Mucosa of descending colon (tissue), 3 donors: ENCODE measurements at regions of chr17 and their contacts with region 1.

Region 1: DNA sequence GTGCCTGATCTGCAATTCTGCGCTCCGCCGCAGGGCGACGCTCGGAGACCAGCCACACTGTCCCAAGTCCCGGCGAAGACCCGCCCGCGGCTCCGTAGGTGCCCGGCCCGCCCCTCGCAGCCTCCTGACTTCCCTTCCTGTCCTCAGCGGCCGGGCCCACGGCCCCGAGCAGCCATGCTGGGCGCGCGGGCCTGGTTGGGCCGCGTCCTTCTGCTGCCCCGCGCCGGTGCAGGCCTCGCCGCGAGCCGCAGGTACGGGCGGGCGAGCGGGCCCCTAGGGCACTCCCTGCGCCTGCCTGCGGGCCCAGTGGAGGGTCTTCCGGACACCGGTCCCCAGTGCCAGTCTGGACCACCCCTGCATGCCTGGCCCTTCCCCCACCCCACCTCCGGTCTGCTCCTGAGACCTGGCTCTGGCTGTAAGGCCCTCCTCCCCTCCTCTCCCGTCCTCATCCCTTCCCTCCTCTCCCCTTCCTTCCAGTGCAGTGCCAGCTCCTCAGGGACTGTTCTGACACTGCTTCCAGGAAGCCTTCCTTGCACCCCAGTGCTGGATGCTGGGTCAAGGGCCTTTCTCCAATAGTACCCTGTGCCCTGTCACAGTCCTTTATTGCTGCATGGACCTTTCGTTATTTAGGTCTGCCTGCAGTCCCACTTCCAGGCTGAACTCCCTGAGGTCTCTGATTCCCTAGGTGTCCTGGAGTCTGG is at the start of gene SPATA20:
- DNase-seq: peak; percentile 95
- ATAC-seq: peak; percentile 78
- H3K4me3 ChIP-seq: peak within 1 kb of the TSS; percentile 26
- H3K4me1 ChIP-seq: peaks cover 39% of the 10 kb centered on the region
- CTCF ChIP-seq: peak; percentile 96
- total RNA-seq, gene SPATA20: 54.3 to 95.3 (median 65.4) TPM

Region 2: DNA sequence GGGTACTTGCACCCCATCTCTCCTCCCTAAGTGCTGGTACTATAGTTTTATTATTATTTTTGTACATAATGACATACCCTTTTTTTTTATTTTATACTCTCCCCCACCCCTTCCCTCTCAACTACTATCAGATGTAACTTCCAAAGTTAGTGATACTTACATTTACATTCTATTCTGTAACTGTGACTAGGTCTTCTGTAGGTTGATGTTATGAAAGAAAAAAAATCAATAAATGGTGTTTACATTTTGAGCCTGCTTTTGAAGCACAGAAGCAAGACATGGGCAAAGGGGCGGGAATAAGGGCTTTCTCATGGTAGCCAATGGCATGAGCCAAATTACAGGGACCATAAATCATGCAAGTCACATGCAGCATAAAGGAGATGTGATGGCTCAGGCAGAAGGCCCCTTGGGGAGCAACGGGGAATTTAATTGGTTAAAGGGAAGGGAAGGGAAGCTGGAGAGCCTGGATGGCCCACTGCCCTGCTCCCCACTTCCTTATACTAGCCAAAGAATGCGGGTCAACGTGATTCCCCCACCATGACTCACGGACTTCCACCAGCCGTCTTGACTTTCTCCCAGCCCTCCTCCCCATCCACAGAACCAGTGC is 123.5 kb before region 1 on chr17:
- intact Hi-C with region 1: no loop called
- DNase-seq: peak in 1 of 3 donors; percentile 27
- ATAC-seq: no peak
- H3K4me3 ChIP-seq: no peak overlapping the region
- H3K4me1 ChIP-seq: peaks cover 45% of the 10 kb centered on the region
- CTCF ChIP-seq: no peak

Region 3: DNA sequence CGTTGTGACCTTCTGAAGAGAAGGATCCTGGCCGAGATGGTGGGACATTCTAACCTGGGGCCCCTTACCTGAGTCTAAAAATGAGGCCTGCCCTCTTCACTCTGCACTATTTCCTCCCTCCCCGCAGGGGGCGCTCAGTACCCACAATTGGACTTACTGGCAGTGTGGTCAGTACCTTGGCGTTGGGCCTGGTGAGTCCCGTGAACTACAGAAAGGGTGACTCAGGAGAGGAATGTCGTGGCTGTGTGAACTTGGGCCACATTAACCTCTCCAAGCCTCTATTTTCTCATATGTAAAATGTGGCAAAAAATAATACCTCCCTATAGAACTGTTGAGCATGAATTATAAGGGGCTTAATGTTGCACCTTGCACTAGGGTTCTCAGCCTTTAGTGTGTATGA is 64.7 kb before region 1 on chr17:
- intact Hi-C with region 1: loop called in 1 of 2 experiments (anchors 10 kb)
- DNase-seq: peak; percentile 91 to 94 (median 92)
- ATAC-seq: peak; percentile 72
- H3K4me3 ChIP-seq: no peak overlapping the region
- H3K4me1 ChIP-seq: peaks cover 19% of the 10 kb centered on the region
- CTCF ChIP-seq: peak; percentile 77

Region 4: DNA sequence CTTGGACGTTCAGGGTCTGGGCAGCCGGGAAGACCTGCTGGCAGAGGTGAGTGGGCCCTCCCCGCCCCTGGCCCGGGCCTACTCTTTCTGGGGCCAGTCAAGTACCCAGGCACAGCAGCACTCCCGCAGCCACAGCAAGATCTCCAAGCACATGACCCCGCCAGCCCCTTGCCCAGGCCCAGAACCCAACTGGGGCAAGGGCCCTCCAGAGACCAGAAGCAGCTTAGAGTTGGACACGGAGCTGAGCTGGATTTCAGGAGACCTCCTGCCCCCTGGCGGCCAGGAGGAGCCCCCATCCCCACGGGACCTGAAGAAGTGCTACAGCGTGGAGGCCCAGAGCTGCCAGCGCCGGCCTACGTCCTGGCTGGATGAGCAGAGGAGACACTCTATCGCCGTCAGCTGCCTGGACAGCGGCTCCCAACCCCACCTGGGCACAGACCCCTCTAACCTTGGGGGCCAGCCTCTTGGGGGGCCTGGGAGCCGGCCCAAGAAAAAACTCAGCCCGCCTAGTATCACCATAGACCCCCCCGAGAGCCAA is 78.9 kb after region 1 on chr17:
- intact Hi-C with region 1: loop called in 1 of 2 experiments (anchors 5 kb)
- DNase-seq: peak; percentile 71 to 75 (median 74)
- ATAC-seq: no peak
- H3K4me3 ChIP-seq: no peak overlapping the region
- H3K4me1 ChIP-seq: peaks cover 26% of the 10 kb centered on the region
- CTCF ChIP-seq: peak; percentile 31

Region 5: GRCh38 chr17:50681263-50682210 is 134.4 kb after region 1 on chr17:
- intact Hi-C with region 1: loop called in 1 of 2 experiments (anchors 10 kb)
- DNase-seq: peak in 1 of 3 donors; percentile 71
- ATAC-seq: peak; percentile 34
- H3K4me3 ChIP-seq: no peak overlapping the region
- H3K4me1 ChIP-seq: peaks cover 35% of the 10 kb centered on the region
- CTCF ChIP-seq: no peak

Region 6: DNA sequence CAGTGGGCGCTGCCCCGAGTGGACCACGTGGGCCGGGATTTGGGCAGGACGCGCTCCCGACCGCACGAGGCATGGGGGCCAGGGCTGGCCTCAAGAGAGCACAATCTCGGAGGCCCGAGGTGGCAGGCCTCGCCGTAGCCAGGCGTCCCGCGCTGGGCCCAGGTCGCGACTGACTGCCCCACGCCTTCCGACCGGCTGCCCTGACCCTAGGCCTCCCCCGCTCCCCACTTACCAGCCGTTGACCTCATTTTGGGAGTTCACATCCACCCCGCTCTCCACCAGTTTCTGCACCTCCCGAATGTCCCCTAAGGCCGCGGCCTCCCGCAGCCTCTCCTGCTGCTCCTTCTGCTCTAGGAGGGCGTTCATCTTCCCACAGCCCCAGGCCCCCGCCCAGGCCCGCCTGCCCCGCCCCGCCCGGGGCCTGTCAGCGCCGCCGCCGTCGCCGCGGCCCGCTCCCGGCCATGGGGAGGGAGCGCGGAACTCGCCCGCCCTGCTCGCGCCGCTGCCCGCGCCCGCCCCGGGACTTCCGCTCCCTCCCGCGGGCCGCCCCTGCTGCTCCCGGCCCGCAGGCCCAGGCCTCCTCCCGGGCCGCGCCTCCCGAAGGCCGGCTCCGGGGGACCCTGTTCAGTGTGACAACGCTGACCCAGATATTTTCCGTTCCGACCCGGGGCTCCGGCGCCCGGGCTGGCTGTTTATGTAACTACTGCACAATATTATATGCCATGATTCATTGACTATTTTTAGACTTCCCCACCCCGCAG is 160.3 kb after region 1 on chr17 and contains the start of gene ANKRD40:
- intact Hi-C with region 1: loop called in 1 of 2 experiments (anchors 10 kb)
- DNase-seq: peak; percentile 90 to 94 (median 91)
- ATAC-seq: peak; percentile 90
- H3K4me3 ChIP-seq: peak within 1 kb of the TSS; percentile 54
- H3K4me1 ChIP-seq: peaks cover 27% of the 10 kb centered on the region
- CTCF ChIP-seq: no peak
- total RNA-seq, gene ANKRD40: 26.8 to 86.0 (median 29.6) TPM

Region 7: GRCh38 chr17:50841949-50842354 is 294.8 kb after region 1 on chr17:
- intact Hi-C with region 1: loop called in 1 of 2 experiments (anchors 10 kb)
- DNase-seq: peak in 2 of 3 donors; percentile 86
- ATAC-seq: peak; percentile 89
- H3K4me3 ChIP-seq: no peak overlapping the region
- H3K4me1 ChIP-seq: peaks cover 5% of the 10 kb centered on the region
- CTCF ChIP-seq: peak; percentile 73

Region 8: GRCh38 chr17:50949989-50950881 is 403.1 kb after region 1 on chr17:
- intact Hi-C with region 1: loop called in 1 of 2 experiments (anchors 10 kb)
- DNase-seq: peak; percentile 82 to 88 (median 84)
- ATAC-seq: peak; percentile 76
- H3K4me3 ChIP-seq: no peak overlapping the region
- H3K4me1 ChIP-seq: peaks cover 55% of the 10 kb centered on the region
- CTCF ChIP-seq: peak; percentile 76